Posterior vena cava (tissue), 2 donors: ENCODE measurements at regions of chr14 and their contacts with region 1.

Region 1: GRCh38 chr14:54230645-54231044 is 166.2 kb upstream of the CDKN3 start:
- DNase-seq: no peak

Region 2: GRCh38 chr14:54267172-54267571 is 36.5 kb after region 1 on chr14:
- intact Hi-C with region 1: loop called in 1 of 2 experiments (anchors 5 kb)
- DNase-seq: no peak